Activated naive CD4-positive, alpha-beta T cell treated with anti-CD3 and anti-CD28 coated beads for 36 hours (primary cell): ENCODE measurements at regions of chr5 and their contacts with region 1.

Region 1: GRCh38 chr5:103475629-103476240 is 86.9 kb downstream of the NUDT12 start:
- DNase-seq: no peak
- H3K4me3 Mint-ChIP-seq: no peak overlapping the region
- H3K27ac Mint-ChIP-seq: no peak overlapping the region
- H3K4me1 Mint-ChIP-seq: no peaks in the 10 kb centered on the region
- H3K27me3 Mint-ChIP-seq: no peaks in the 10 kb centered on the region

Region 2: DNA sequence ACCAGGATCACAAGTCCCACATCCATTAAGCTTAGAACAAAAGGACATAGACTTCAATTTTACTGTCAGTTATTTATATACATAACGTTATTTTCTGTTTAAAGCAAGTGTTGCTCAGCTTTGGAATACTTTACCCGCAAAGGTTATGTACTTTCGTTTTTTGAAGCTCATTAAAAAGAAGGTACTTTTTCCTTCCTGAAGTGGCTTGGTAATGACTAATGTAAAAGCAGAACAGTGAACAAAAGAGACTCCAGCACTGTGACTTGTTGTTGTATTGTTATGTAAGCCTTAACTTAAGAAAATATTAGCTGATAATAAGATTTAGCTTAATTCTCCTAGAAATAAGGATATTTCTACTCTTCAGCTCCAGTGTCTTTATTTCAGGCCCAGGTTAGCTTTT is 879.6 kb before region 1 on chr5:
- CTCF ChIA-PET with region 1: no interaction called
- intact Hi-C with region 1: loop called (anchors 10 kb)
- DNase-seq: no peak
- H3K4me3 Mint-ChIP-seq: no peak overlapping the region
- H3K27ac Mint-ChIP-seq: no peak overlapping the region
- H3K4me1 Mint-ChIP-seq: peaks cover 18% of the 10 kb centered on the region
- H3K27me3 Mint-ChIP-seq: no peaks in the 10 kb centered on the region

Region 3: GRCh38 chr5:103151156-103151555 is 324.6 kb before region 1 on chr5:
- CTCF ChIA-PET with region 1: no interaction called
- intact Hi-C with region 1: loop called (anchors 5 kb)
- DNase-seq: no peak
- H3K4me3 Mint-ChIP-seq: no peak overlapping the region
- H3K27ac Mint-ChIP-seq: no peak overlapping the region
- H3K4me1 Mint-ChIP-seq: no peaks in the 10 kb centered on the region
- H3K27me3 Mint-ChIP-seq: no peaks in the 10 kb centered on the region

Region 4: DNA sequence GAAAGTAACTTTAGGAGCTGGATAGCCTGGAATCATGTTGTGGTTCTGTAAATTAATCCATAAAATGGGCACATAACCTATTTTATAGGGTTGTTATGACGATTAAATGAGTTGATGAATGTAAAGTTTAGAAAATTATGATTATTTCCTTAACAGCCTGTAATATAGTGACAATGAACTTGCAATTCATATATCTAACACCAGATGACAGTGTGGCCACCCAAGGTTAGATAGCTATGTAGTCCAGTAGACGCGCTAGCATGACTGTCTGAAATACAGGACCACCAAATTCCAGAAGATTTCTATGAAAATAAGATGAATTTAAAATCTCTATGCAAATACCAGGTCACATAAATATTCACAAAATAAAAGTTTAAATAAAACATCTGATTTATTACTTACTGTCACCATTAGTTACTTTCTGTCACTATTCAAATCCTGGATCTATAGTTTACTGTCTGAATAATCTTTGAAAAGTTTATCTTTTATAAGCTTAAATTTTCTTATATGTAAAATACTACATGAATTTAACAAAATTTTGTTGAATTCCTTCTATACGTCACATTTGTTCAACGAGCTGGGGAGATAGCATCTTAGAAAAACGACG is 243.2 kb before region 1 on chr5:
- CTCF ChIA-PET with region 1: interaction called, 28 read pairs
- intact Hi-C with region 1: loop called (anchors 1 kb)
- DNase-seq: peak; percentile 15
- H3K4me3 Mint-ChIP-seq: no peak overlapping the region
- H3K27ac Mint-ChIP-seq: no peak overlapping the region
- H3K4me1 Mint-ChIP-seq: no peaks in the 10 kb centered on the region
- H3K27me3 Mint-ChIP-seq: peaks cover 15% of the 10 kb centered on the region

Region 5: GRCh38 chr5:103428411-103428871 is 47.3 kb before region 1 on chr5:
- CTCF ChIA-PET with region 1: no interaction called
- intact Hi-C with region 1: no loop called
- DNase-seq: no peak
- H3K4me3 Mint-ChIP-seq: no peak overlapping the region
- H3K27ac Mint-ChIP-seq: no peak overlapping the region
- H3K4me1 Mint-ChIP-seq: no peaks in the 10 kb centered on the region
- H3K27me3 Mint-ChIP-seq: peaks cover 7% of the 10 kb centered on the region